ENCODE measurements at regions of chr22 and their contacts with region 1.

Region 1: GRCh38 chr22:40679964-40680818 is 907 bp downstream of the MCHR1 start:
- DNase-seq: no peak
- H3K27ac ChIP-seq: no peak overlapping the region
- CTCF ChIP-seq: no peak

Region 2: DNA sequence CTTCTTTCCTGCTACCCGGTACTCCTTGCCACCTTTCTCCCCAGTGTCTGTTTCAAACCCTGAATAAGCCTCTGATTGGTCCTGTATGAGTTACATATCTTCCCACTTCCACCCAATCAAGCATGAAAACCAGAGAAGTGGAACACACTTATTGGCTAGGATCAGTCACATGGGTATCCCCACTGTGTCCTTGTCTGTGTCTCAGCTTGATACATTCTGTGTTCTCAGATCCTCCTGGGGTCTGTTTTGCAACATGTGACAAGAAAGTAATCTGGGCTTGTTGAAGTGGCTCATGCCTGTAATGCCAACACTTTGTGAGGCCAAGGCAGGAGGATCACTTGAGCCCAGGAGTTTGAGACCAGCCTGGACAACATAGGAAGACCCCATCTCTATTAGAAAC is 23.0 kb after region 1 on chr22:
- CTCF ChIA-PET with region 1: no interaction called
- POLR2A ChIA-PET with region 1: no interaction called
- DNase-seq: no peak
- H3K27ac ChIP-seq: no peak overlapping the region
- CTCF ChIP-seq: no peak

Region 3: GRCh38 chr22:40759294-40759840 is 79.2 kb after region 1 on chr22:
- CTCF ChIA-PET with region 1: interaction called, 13 read pairs
- POLR2A ChIA-PET with region 1: no interaction called
- DNase-seq: no peak
- H3K27ac ChIP-seq: peak overlapping the region; percentile 24; the same call in 1 of the 2 replicates
- CTCF ChIP-seq: no peak

Region 4: DNA sequence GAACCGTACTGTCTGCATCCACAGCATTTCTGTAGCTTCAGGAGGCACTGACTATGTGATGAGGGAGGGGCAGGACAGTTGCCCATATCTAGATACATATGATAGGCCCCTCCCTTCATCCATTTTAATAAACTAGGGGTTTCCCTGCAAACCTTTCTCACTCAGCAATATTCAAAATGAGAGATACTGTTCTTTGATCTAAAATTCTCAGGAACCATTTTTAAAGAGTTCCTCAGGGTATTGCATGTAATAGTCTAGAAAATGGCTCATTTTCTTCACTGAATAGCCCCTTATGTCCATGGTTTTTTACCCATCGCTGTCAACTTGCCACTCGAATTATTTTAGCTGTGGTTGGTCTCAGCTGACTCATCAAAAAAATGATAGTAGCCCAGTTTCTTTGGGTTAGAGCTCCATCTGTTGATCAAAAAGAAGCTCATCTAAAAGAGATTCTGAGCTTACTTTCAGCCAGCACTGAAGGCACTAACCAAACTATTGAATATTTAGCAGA is 218.7 kb after region 1 on chr22:
- CTCF ChIA-PET with region 1: no interaction called
- POLR2A ChIA-PET with region 1: interaction called, 12 read pairs
- DNase-seq: peak; percentile 26
- H3K27ac ChIP-seq: no peak overlapping the region
- CTCF ChIP-seq: peak; percentile 64